ENCODE measurements at regions of chr15 and their contacts with region 1.

Region 1: DNA sequence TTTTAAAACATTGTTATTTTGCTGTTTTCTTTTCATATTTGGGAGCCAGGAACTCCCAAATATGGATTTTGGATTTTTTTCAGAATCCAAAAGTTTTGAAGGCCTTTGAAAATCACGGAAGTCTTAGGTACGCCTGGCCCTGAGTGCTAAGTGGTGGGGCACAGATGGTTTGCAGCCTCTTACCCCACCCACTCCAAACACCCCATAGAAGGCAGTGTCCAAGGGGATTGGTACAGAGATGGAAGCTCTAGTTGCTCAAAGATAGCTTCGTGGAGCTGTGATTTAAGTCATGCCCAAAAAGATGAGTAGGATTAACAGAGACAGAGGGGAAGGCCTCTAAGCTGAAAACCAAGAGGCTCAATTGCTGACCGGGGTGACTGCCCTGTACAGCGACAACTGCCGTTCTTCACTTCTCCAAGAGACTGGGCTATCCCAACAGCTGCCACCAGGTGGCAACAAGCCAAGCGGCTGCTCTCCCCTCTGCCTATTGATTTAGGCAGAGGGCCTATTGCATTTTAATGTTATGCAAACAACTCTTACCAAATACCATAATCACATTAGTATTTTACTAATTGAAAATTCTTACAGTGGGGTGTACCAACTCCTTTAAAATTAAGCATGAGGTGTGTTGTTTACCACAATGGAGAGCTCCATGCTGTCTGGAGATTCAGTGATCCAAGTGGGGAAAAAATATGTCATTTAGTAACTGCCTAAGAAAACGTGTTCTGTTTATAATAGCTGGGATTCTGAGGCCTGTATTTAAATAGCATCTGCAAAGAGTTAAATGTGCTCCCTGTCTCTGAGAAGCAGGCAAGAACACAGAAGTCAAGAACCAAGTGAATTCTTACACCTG is 64.0 kb upstream of the C15orf61 start:
- DNase-seq: peak; percentile 85 to 93 (median 91)
- ATAC-seq: peak; percentile 89 to 94
- H3K4me3 ChIP-seq: no peak overlapping the region
- H3K27ac ChIP-seq: no peak overlapping the region
- H3K4me1 ChIP-seq: no peaks in the 10 kb centered on the region
- H3K27me3 ChIP-seq: no peaks in the 10 kb centered on the region

Region 2: DNA sequence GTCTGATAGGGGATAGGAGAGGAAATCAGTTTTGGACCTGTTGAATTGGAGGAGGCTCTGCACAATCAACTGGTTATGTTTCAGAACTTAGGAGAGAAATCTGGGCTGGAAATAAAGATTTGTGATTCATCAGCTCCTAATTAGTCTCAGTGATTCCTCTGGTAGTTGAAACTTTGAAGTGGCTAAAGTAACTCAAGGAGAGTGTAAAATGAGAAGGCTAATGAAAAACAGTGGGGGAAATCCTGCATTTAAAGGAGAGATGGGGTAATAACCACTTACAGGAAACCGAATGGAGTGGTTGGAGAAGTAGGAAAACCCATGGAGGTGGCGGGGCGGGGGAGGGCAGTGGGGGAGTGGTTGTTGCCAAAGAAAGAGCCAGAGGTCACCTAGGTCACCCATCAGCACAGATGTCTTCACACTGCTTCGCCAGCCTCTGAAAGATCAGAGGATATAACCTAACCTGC is 118.2 kb after region 1 on chr15:
- intact Hi-C with region 1: no loop called
- DNase-seq: no peak
- ATAC-seq: no peak
- H3K4me3 ChIP-seq: no peak overlapping the region
- H3K27ac ChIP-seq: no peak overlapping the region
- H3K4me1 ChIP-seq: no peaks in the 10 kb centered on the region
- H3K27me3 ChIP-seq: no peaks in the 10 kb centered on the region

Region 3: DNA sequence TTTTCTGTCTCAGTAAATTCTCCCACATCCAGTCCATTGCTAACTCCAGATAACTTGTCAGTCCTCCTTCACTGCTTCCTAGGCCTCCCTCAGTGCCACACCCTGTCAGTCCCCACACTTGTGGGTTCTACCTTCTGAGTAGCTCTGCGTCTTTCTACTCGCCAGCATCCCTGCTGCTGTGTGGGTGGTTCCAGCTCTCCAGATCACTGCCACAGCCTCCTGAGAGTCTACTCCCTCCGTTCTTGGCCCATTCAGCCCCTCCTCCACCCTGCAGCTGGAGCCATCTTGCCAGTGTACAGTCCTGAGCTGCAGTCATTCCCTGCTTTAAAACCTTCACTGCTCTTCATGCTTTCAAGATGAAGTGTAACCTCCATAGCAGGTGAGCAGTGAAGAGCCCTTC is 130.9 kb after region 1 on chr15:
- intact Hi-C with region 1: no loop called
- DNase-seq: no peak
- ATAC-seq: no peak
- H3K4me3 ChIP-seq: no peak overlapping the region
- H3K27ac ChIP-seq: no peak overlapping the region
- H3K4me1 ChIP-seq: no peaks in the 10 kb centered on the region
- H3K27me3 ChIP-seq: no peaks in the 10 kb centered on the region

Region 4: GRCh38 chr15:67784090-67784781 is 327.3 kb after region 1 on chr15:
- intact Hi-C with region 1: no loop called
- DNase-seq: no peak
- ATAC-seq: no peak
- H3K4me3 ChIP-seq: no peak overlapping the region
- H3K27ac ChIP-seq: no peak overlapping the region
- H3K4me1 ChIP-seq: no peaks in the 10 kb centered on the region
- H3K27me3 ChIP-seq: no peaks in the 10 kb centered on the region

Region 5: DNA sequence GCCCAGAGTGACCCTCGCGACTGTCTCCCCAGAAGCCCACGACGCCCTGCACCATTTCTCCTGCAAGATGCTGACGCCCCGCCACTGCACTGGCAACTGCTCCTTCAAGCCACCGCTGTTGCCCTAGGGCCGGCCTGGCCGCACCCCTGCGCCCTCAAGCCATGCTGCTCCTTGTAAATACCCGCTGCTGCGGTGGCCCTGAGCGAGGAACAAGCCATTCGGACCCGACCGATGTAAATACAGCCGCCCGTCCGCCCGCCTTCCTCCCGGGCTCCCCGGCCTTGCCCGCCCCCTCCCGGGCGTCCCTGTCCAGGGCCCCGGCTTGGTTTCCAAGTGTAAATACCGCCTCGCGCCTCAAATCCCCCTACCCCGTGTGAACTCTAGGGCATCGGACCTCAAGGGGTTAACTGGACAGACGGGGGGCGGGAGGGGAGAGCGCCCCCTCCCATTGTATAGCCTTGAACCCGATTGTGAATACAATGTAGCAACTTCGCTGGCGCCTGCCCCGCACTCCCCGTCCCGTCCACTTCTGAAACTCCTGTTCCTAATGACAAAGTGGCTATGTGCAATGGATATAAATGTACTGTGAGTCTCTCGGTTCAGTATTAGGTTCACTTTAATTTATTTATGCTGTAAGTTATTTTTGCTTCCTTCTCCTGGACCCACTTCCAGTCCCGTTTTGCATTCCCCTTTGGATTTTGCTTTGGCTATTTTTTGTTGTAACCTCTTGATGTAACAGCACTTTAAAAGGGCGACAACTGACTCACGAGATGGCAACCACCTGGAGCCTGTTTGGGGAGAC is 377.0 kb after region 1 on chr15:
- intact Hi-C with region 1: loop called (anchors 2 to 5 kb)
- DNase-seq: no peak
- ATAC-seq: peak; percentile 24 to 38
- H3K4me3 ChIP-seq: peak overlapping the region; percentile 50
- H3K27ac ChIP-seq: no peak overlapping the region
- H3K4me1 ChIP-seq: peaks cover 3% of the 10 kb centered on the region
- H3K27me3 ChIP-seq: no peaks in the 10 kb centered on the region

Measured in right cardiac atrium (tissue), 5 donors.